ENCODE measurements at regions of chr12 and their contacts with region 1.

Region 1: GRCh38 chr12:21324551-21324950 is 10.2 kb downstream of the SLCO1A2 start:
- DNase-seq: no peak
- H3K4me3 ChIP-seq: peak overlapping the region in 56 of 59 donors; percentile 20 to 72 (median 50)
- H3K27ac ChIP-seq: peak overlapping the region; percentile 62 to 99 (median 95)
- H3K27me3 ChIP-seq: no peaks in the 10 kb centered on the region
- CTCF ChIP-seq: peak in 3 of 56 donors; percentile 12 to 16 (median 14)

Region 2: DNA sequence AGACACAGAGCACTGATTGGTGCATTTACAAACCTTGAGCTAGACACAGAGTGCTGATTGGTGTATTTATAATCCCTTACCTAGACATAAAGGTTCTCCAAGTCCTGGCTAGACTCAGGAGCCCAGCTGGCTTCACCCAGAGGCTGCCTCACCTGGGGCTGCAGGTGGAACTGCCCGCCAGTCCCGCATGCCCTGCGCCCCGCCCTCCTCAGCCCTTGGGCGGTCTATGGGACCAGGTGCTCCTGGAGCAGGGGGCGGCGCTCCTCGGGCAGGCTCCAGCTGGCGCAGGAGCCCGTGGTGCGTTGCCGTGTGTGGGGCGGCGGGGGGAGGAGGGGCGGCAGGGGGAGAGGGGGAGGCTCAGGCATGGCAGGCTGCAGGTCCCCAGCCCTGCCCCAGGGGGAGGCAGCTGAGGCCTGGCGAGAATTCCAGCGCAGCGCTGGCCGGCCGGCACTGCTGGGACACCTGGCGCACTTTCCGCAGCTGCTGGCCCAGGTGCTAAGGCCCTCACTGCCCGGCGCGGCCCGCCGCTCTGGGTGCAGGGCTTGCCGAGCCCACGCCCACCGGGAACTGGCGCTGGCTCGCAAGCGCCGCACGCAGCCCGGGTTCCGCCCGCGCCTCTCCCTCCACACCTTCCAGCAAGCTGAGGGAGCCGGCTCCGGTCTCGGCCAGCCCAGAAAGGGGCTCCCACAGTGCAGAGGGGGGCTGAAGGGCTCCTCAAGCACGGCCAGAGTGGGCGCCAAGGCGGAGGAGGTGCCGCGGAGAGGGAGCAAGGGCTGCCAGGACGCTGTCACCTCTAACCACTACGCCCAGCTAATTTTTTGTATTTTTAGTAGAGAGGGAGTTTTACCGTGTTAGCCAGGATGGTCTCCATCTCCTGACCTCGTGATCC is 517.1 kb before region 1 on chr12:
- intact Hi-C with region 1: no loop called
- DNase-seq: no peak
- H3K4me3 ChIP-seq: no peak overlapping the region
- H3K27ac ChIP-seq: no peak overlapping the region
- H3K27me3 ChIP-seq: no peaks in the 10 kb centered on the region
- CTCF ChIP-seq: no peak

Region 3: GRCh38 chr12:21336656-21337055 is 12.1 kb after region 1 on chr12:
- intact Hi-C with region 1: loop called in 1 of 2 experiments (anchors 1 kb)
- DNase-seq: peak; percentile 11 to 81 (median 60)
- H3K4me3 ChIP-seq: peak overlapping the region in 41 of 59 donors; percentile 0 to 58 (median 21)
- H3K27ac ChIP-seq: peak overlapping the region; percentile 43 to 99 (median 93)
- H3K27me3 ChIP-seq: no peaks in the 10 kb centered on the region
- CTCF ChIP-seq: no peak

Region 4: DNA sequence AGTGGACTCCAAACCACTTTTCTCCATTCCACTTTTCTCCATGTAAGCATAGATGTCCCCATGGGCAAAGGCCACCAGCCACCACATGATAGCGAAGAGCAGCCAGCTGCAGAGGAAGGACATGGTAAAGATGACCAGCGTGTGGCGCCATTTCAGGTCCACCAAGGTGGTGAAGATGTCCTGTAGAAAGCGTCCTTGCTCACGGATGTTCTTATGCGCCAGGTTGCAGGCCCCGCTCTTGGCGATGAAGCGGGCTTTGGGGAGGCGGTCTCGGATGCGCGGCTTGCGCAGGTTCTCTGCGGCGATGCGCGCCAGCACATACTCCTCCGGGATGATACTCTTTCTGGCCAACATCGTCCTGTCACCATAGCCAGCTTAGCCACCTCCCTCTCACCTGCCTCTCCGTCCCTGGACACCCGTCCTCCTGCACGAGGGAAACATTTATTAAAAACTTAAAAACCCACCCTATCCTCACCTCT is 448.8 kb after region 1 on chr12:
- intact Hi-C with region 1: no loop called
- DNase-seq: peak in 3 of 10 donors; percentile 6 to 52 (median 15)
- H3K4me3 ChIP-seq: peak overlapping the region in 56 of 59 donors; percentile 3 to 76 (median 64)
- H3K27ac ChIP-seq: peak overlapping the region in 50 of 59 donors; percentile 6 to 90 (median 79)
- H3K27me3 ChIP-seq: peaks cover 0 to 15% (median 0%) of the 10 kb centered on the region in 45 donors
- CTCF ChIP-seq: peak in 19 of 56 donors; percentile 2 to 40 (median 22)